Sigmoid colon (tissue), 7 donors: ENCODE measurements at regions of chr10 and their contacts with region 1.

Region 1: DNA sequence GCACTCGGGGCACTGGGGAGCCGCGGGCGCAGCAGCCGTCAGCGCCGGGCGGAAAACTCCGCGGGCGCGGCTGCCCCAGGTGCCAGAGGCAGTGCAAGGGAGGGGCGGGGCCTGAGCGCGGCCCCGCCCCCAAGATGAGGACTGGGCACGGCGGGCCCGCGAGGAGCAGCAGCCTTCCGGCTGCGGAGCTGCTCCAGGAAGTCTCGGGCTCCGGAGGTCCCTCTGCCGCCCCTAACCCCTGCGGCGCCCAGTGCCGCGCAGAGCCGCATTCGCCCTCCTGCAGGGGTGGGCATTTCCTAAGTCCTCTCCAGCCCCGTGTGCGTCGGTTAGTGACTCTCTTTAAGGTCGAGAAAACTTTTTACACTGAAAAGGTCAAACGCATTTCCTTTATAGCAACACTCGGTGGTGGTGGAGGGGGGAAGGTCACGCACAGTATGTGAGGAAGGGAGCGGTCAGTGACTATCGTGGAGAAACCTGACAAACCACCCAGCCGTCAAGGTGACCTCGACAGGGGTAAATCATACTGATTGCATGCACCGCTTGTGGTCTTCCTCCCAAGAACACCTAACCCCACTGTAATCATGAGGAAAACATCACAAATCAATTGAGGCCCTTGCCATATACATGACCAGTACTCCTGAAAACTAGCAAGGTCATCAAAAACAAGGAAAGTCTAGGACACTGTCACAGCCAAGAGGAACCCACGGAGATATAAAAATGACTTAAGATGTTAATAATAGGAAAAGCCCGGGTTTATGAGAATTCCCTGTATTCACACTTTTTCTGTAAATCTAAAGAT is at the start of gene ANXA11:
- DNase-seq: peak; percentile 91
- H3K4me3 ChIP-seq: peak within 1 kb of the TSS; percentile 70 to 93 (median 86)
- H3K27ac ChIP-seq: peak within 1 kb of the TSS; percentile 96 to 99 (median 96)
- H3K4me1 ChIP-seq: peaks cover 0 to 77% (median 63%) of the 10 kb centered on the region in 4 donors
- H3K27me3 ChIP-seq: no peaks in the 10 kb centered on the region
- CTCF ChIP-seq: no peak
- EP300 ChIP-seq: peak in 1 of 4 donors; percentile 3
- POLR2A ChIP-seq: peak; percentile 91 to 95
- total RNA-seq, gene ANXA11: 63.2 to 109 (median 75.7) TPM

Region 2: GRCh38 chr10:80078448-80079311 is 127.0 kb before region 1 on chr10 and contains the start of gene TMEM254:
- intact Hi-C with region 1: loop called (anchors 5 kb)
- DNase-seq: peak; percentile 96
- H3K4me3 ChIP-seq: peak within 1 kb of the TSS; percentile 70 to 87 (median 78)
- H3K27ac ChIP-seq: peak within 1 kb of the TSS; percentile 94 to 96 (median 96)
- H3K4me1 ChIP-seq: peaks cover 0 to 16% (median 12%) of the 10 kb centered on the region in 4 donors
- H3K27me3 ChIP-seq: no peaks in the 10 kb centered on the region
- CTCF ChIP-seq: no peak
- EP300 ChIP-seq: no peak
- POLR2A ChIP-seq: peak in 1 of 2 donors; percentile 5
- total RNA-seq, gene TMEM254: 11.4 to 18.0 (median 11.5) TPM

Region 3: DNA sequence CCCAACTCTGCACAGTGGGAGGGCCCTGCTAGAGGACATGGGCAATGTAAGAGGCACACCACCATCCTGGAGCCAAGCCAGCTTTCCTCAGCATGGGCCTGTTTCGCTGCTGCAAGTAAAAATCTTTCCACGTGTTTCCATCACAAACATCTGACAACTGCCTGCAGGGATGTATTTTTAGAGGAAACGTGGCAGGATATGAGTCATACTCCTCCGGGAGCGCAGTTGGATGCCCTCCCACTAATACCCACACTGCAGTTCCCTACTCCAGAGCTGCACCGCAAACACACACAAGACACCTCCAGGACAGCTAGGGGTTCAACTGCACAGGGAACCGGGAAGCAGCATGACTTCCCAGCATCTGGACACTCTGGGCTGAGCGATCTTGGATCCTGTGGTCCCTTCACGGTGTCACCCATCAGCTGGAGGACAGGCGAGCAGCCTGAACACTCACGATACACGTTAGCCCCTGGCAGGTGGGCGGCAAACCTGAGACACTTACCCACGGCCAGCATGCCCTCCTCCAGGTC is 47.0 kb before region 1 on chr10:
- intact Hi-C with region 1: loop called (anchors 2 kb)
- DNase-seq: peak; percentile 96
- H3K4me3 ChIP-seq: no peak overlapping the region
- H3K27ac ChIP-seq: peak overlapping the region; percentile 65 to 89 (median 79)
- H3K4me1 ChIP-seq: peaks cover 0 to 59% (median 39%) of the 10 kb centered on the region in 4 donors
- H3K27me3 ChIP-seq: no peaks in the 10 kb centered on the region
- CTCF ChIP-seq: no peak
- EP300 ChIP-seq: peak in 1 of 4 donors; percentile 73
- POLR2A ChIP-seq: no peak